Left ventricle myocardium superior (tissue), 1 donor: ENCODE measurements at regions of chr4 and their contacts with region 1.

Region 1: DNA sequence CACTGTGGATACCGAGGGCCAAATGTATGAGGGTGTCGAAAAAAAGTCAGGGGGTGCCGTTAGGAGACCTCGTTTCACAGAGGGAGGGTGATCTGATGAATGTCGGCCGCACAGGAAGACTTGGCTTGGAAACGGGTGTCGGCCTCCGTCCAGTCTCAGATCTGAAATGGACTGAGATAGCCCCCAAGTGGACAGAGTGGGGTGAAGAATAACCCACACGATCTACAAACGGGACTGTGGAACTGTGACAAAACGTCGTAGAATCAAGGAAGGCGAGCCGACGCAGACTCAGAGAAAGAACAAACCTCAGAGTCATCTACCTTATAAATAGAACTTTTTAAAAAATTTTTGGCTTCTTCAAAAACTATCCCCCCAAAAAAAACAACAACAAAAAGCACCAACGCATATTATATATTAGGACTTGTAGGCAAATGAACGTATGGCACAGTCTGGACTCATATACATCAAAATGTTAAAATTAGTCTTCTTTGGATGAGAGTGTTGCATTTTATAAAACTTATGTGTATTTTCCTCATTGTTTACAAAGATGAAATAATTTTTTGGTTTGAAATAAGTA is 63.8 kb upstream of the IRF2 start:
- DNase-seq: peak; percentile 93
- ATAC-seq: peak; percentile 94

Region 2: DNA sequence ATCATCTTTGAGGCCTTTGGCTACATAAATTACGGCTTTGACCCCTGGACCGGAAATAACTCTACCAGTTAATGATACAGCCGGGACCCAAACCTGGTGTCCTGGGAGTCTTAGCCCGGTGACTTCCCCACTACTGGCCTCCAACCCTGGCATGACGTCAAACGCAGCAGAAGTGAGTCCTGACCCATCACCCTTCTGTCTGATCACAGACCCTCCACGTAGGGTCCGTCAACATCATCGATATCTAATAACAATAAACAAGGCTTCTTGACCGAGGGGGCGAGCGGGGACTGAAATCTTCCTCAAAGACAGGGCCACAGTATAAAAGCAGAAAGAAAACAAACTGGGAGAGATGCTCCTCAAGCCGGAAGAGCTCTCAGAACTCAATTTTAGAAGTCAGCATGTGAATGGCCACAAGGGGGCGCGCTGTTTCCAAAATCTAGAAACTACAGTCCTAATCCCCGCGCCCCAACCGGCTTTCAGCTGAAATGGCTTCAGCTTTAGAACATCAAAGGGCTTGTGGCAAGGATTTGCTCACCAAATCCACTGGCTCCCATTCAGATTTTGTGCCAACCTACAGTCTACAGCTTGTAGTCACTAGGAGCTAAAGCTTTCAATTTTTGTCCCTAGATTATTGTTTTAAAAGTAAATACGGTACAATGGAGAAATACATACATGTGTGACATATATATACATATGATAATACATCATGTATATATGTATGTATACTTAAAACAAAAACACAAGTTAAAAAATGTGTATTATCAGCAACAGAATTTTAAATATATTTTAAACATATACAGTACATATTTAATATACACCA is 274.0 kb before region 1 on chr4:
- intact Hi-C with region 1: loop called (anchors 2 kb)
- DNase-seq: peak; percentile 95
- ATAC-seq: peak; percentile 89

Region 3: GRCh38 chr4:184474263-184475095 is 63.6 kb before region 1 on chr4 and contains the start of gene IRF2:
- intact Hi-C with region 1: loop called (anchors 2 kb)
- DNase-seq: peak; percentile 98
- ATAC-seq: peak; percentile 91
- total RNA-seq, gene IRF2: 33.0 TPM